ENCODE measurements at regions of chr10 and their contacts with region 1.

Region 1: GRCh38 chr10:109883859-109884771 is 39.2 kb downstream of the XPNPEP1 start:
- DNase-seq: peak; percentile 70
- ATAC-seq: peak; percentile 76
- H3K4me3 ChIP-seq: no peak overlapping the region
- H3K4me3 Mint-ChIP-seq: no peak overlapping the region
- H3K27ac ChIP-seq: no peak overlapping the region
- H3K27ac Mint-ChIP-seq: peak overlapping the region; percentile 46
- H3K4me1 ChIP-seq: no peaks in the 10 kb centered on the region
- H3K4me1 Mint-ChIP-seq: peaks cover 4% of the 10 kb centered on the region
- H3K27me3 ChIP-seq: no peaks in the 10 kb centered on the region
- H3K27me3 Mint-ChIP-seq: no peaks in the 10 kb centered on the region
- CTCF ChIP-seq: peak; percentile 98

Region 2: DNA sequence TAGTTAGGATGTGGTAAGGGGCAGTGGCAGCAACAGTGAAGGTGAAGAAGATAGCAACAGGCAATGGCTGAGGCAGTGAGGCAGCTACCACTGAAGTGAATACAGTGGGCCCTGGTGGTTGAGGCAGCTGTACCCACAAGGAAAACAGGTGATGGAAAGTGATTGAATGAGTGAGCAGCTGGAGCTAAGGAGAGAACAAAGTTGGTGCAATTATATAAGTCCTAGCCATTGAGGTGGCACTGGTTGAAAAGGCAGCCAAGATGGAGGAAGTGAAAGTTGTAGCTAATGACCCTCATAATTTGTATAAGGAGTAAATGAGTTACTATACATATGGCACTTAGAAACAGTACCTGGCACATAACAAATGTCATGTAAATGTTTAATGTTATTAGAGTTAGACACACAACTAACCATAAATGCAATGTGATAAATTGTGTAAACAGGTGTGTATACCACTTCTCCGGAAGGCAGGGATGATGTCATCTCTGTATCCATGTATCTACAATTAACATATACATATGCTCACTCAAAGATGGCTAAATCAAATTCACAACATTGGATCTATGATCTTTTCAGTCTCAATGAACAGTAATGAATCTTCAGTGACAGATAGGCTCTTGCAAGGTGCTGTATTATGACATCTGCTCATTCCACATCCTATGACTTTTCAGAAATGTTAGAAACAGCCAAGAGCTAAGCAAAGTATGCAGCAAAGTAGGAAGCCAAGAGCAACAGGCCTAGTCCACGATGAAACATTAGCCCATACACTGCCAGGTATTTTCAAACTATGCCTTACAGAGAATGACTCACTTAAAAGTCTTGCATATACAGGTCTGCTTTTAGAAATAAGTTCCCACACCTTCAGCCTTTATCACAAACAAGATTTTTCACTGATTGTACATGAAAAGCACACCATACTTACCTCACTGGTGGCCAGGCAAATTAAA is 28.5 kb after region 1 on chr10:
- CTCF ChIA-PET with region 1: interaction called, 35 read pairs
- POLR2A ChIA-PET with region 1: no interaction called
- intact Hi-C with region 1: no loop called
- DNase-seq: peak; percentile 64
- ATAC-seq: peak; percentile 73
- H3K4me3 ChIP-seq: no peak overlapping the region
- H3K4me3 Mint-ChIP-seq: peak overlapping the region; percentile 11
- H3K27ac ChIP-seq: peak overlapping the region; percentile 0 to 46
- H3K27ac Mint-ChIP-seq: peak overlapping the region; percentile 73
- H3K4me1 ChIP-seq: peaks cover 51 to 52% of the 10 kb centered on the region in 2 donors
- H3K4me1 Mint-ChIP-seq: peaks cover 69% of the 10 kb centered on the region
- H3K27me3 ChIP-seq: no peaks in the 10 kb centered on the region
- H3K27me3 Mint-ChIP-seq: no peaks in the 10 kb centered on the region
- CTCF ChIP-seq: no peak

Region 3: GRCh38 chr10:109956454-109957091 is 72.5 kb after region 1 on chr10:
- CTCF ChIA-PET with region 1: interaction called, 12 read pairs
- POLR2A ChIA-PET with region 1: no interaction called
- intact Hi-C with region 1: loop called (anchors 1 kb)
- DNase-seq: peak; percentile 62
- ATAC-seq: peak; percentile 85
- H3K4me3 ChIP-seq: no peak overlapping the region
- H3K4me3 Mint-ChIP-seq: peak overlapping the region; percentile 5
- H3K27ac ChIP-seq: no peak overlapping the region
- H3K27ac Mint-ChIP-seq: no peak overlapping the region
- H3K4me1 ChIP-seq: peaks cover 0 to 9% of the 10 kb centered on the region in 2 donors
- H3K4me1 Mint-ChIP-seq: peaks cover 12% of the 10 kb centered on the region
- H3K27me3 ChIP-seq: no peaks in the 10 kb centered on the region
- H3K27me3 Mint-ChIP-seq: no peaks in the 10 kb centered on the region
- CTCF ChIP-seq: peak; percentile 65

Region 4: DNA sequence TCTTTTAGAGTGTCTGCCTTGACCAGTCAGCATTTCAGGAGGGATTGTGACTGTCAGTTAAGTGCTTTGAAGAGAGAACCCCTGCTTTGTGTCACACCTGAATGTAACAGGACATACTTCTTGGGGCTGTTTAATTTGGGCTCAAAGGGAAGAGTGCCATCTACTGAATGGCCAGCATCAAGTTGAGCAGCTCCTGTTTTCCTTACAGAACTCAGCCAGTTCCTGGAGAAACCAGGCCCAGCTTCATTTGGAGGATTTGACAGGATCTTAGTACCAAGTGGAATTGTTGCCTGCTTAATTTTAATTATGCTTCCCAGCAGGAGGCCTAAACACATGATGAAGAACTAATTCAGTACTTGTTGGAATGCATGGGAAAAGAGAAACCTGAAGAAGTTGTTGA is 131.9 kb after region 1 on chr10:
- CTCF ChIA-PET with region 1: interaction called, 19 read pairs
- POLR2A ChIA-PET with region 1: no interaction called
- intact Hi-C with region 1: loop called (anchors 2 kb)
- DNase-seq: no peak
- ATAC-seq: no peak
- H3K4me3 ChIP-seq: no peak overlapping the region
- H3K4me3 Mint-ChIP-seq: no peak overlapping the region
- H3K27ac ChIP-seq: no peak overlapping the region
- H3K27ac Mint-ChIP-seq: no peak overlapping the region
- H3K4me1 ChIP-seq: peaks cover 32 to 36% of the 10 kb centered on the region in 2 donors
- H3K4me1 Mint-ChIP-seq: peaks cover 67% of the 10 kb centered on the region
- H3K27me3 ChIP-seq: no peaks in the 10 kb centered on the region
- H3K27me3 Mint-ChIP-seq: no peaks in the 10 kb centered on the region
- CTCF ChIP-seq: no peak

Region 5: DNA sequence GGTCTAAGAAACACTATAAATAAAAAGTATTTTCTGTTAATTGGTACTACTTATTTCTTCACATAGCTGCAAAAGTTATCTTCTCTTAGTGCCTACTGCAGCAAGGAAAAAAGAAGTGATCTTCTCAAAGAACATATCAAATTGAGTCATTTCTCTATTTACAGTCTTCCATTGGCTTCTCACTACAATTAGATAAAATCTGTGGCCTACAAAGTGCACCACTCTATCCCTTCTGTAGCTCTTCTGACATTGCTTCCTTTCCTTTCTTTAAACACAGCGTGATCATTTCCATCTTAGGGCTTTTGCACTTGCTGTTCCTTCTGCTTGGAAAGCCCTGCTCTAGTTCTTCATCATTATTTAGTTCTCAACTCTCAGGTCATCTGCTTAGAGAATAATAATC is 368.0 kb after region 1 on chr10:
- CTCF ChIA-PET with region 1: no interaction called
- POLR2A ChIA-PET with region 1: no interaction called
- intact Hi-C with region 1: no loop called
- DNase-seq: no peak
- ATAC-seq: no peak
- H3K4me3 ChIP-seq: no peak overlapping the region
- H3K4me3 Mint-ChIP-seq: no peak overlapping the region
- H3K27ac ChIP-seq: no peak overlapping the region
- H3K27ac Mint-ChIP-seq: no peak overlapping the region
- H3K4me1 ChIP-seq: no peaks in the 10 kb centered on the region
- H3K4me1 Mint-ChIP-seq: no peaks in the 10 kb centered on the region
- H3K27me3 ChIP-seq: no peaks in the 10 kb centered on the region
- H3K27me3 Mint-ChIP-seq: no peaks in the 10 kb centered on the region
- CTCF ChIP-seq: no peak

Region 6: DNA sequence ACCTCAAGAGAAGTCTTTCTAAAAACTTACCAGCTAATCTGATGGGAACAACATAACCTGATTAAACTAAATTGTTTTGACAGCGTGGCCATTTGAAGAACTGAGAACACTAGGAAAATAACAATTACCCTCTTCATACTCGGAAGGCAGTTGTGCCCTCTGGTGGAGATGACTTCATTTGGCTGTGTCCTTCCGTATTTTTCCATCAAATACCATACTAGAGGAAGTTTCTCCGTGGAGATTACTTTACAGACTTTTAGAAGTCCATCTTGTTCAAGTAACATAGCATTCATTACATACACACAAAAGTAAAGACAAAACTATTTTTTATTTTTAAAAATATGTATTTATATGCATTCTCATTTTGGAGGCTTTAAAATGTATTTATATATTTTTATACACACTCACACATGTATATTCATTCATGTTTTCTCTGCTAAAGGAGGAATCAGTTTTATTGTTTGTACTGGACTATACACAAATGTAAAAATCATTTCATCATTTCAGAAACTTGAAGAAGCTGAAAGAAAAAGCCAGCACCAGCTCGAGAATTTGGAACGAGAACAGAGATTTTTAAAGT is 395.4 kb after region 1 on chr10:
- CTCF ChIA-PET with region 1: interaction called, 28 read pairs
- POLR2A ChIA-PET with region 1: no interaction called
- intact Hi-C with region 1: loop called (anchors 1 kb)
- DNase-seq: peak; percentile 79
- ATAC-seq: peak; percentile 68
- H3K4me3 ChIP-seq: peak overlapping the region in 1 of 5 experiments; percentile 38
- H3K4me3 Mint-ChIP-seq: peak overlapping the region; percentile 26
- H3K27ac ChIP-seq: no peak overlapping the region
- H3K27ac Mint-ChIP-seq: no peak overlapping the region
- H3K4me1 ChIP-seq: peaks cover 11 to 17% of the 10 kb centered on the region in 2 donors
- H3K4me1 Mint-ChIP-seq: peaks cover 21% of the 10 kb centered on the region
- H3K27me3 ChIP-seq: no peaks in the 10 kb centered on the region
- H3K27me3 Mint-ChIP-seq: no peaks in the 10 kb centered on the region
- CTCF ChIP-seq: peak; percentile 84

Measured in B cell (primary cell).